ENCODE measurements at regions of chr12 and their contacts with region 1.

Region 1: GRCh38 chr12:110449799-110450497 is at the start of gene ARPC3:
- DNase-seq: peak; percentile 90
- ATAC-seq: peak; percentile 97
- H3K4me3 ChIP-seq: peak within 1 kb of the TSS; percentile 81 to 98 (median 95)
- H3K27ac ChIP-seq: peak within 1 kb of the TSS; percentile 87
- H3K4me1 ChIP-seq: peaks cover 40% of the 10 kb centered on the region
- H3K27me3 ChIP-seq: no peaks in the 10 kb centered on the region
- CTCF ChIP-seq: peak; percentile 98
- EP300 ChIP-seq: 0 out of 4 replicates have a peak, but pooled peaks have one; percentile 2 to 19
- POLR2A ChIP-seq: peak; percentile 70 to 73
- RAD21 ChIP-seq: peak; percentile 93
- total RNA-seq, gene ARPC3: 234 and 322 TPM in 2 replicates

Region 2: DNA sequence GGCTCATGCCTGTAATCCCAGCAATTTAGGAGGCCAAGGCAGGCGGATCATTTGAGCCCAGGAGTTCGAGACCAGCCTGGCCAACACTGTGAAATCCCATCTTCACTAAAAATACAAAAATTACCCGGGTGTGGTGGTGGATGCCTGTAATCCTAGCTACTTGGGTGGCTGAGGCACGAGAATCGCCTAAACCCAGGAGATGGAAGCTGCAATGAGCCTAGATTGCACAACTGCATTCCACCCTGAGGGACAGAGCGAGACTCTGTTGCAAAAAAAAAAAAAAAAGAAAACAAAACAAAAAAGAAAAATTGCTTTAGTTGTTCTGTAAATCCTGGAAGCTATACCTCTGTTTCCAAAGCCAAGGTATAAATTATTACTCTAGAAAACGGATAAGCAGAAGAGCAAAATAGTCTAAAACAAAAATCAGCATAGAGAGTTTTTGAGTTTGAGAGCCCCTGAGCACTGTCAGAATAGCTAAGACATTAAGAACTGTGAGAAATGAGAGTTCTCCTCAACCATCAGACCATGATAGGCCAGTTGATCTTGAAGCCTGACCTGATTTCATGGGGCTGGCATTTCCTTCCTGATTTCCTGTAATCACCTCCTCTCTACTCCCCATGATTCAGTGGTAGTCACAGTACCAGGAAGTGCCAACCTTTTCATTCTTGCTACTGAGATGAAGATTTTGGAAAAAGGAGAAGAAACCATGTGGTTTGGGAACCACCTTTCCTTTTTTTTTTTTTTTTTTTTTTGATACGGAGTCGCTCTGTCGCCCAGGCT is 137.2 kb before region 1 on chr12:
- CTCF ChIA-PET with region 1: no interaction called
- POLR2A ChIA-PET with region 1: no interaction called
- in situ Hi-C with region 1: no loop called
- intact Hi-C with region 1: no loop called
- DNase-seq: no peak
- ATAC-seq: peak; percentile 35
- H3K4me3 ChIP-seq: no peak overlapping the region
- H3K27ac ChIP-seq: peak overlapping the region; percentile 35
- H3K4me1 ChIP-seq: peaks cover 67% of the 10 kb centered on the region
- H3K27me3 ChIP-seq: no peaks in the 10 kb centered on the region
- CTCF ChIP-seq: no peak
- EP300 ChIP-seq: no peak
- POLR2A ChIP-seq: no peak
- RAD21 ChIP-seq: no peak

Region 3: DNA sequence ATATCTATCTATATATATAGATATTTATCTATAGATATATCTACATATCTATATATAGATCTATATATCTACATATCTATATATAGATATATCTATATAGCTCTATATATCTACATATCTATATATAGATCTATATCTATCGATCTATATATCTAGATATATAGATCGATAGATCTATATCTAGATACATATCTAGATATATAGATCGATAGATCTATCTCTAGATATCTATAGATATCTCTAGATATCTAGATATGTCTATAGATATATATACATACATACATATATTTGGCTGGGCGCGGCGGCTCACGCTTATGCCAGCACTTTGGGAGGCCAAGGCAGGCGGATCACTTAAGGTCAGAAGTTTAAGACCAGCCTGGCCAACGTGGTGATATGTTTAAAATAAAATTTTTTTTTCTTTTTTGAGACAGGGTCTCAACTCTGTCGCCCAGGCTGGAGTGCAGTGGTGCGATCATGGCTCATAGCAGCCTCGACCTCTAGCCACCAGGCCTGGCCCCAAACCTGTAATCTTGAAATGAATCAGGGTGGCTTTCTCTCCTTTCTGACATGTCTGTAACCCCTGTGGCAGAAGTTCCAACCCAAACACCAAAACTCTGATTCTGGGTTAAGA is 17.9 kb before region 1 on chr12:
- CTCF ChIA-PET with region 1: no interaction called
- POLR2A ChIA-PET with region 1: interaction called, 15 read pairs
- in situ Hi-C with region 1: no loop called
- intact Hi-C with region 1: no loop called
- DNase-seq: no peak
- ATAC-seq: no peak
- H3K4me3 ChIP-seq: peak overlapping the region in 2 of 3 experiments; percentile 57 to 59; a peak in 2 of 6 replicates
- H3K27ac ChIP-seq: no peak overlapping the region
- H3K4me1 ChIP-seq: no peaks in the 10 kb centered on the region
- H3K27me3 ChIP-seq: no peaks in the 10 kb centered on the region
- CTCF ChIP-seq: no peak
- EP300 ChIP-seq: no peak
- POLR2A ChIP-seq: no peak
- RAD21 ChIP-seq: no peak

Region 4: DNA sequence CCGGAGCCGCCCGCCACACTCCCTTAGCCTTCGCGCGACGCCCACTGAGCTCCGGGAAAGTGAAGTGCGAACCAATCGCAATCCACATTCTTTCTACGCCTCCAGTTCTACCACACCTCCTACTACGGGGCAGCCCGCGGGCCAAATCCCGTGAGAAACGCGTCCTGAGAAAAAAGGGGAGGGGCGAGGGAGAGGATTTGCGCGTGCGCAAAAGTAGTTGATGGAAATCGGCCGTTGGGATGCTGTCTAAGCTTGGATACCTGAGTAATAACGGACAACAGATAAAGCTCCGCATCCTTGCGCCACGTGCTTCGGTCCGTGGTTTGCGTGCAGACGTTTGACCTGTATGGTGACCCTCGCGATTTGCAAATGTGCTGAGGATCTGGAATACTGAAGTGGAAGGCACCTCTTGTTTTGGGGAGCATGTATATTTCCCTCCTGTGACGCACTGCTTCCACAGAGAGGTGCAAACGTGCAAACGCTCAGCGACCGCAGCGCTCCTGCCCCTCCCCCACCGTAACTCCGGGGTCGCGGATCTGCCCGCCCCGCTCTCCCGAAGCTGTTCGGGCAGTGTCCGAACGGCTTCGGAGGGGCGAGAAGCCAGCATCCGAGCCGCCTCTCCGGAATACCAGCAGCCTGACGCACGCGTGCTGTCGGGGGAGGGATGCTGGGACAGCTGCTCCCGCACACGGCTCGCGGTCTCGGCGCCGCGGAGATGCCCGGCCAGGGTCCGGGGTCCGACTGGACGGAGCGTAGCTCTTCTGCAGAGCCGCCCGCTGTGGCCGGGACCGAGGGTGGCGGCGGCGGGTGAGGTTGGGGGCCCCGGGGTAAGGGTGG is 18.5 kb after region 1 on chr12 and contains the starts of genes FAM216A and GPN3:
- CTCF ChIA-PET with region 1: interaction called, 4 read pairs
- POLR2A ChIA-PET with region 1: interaction called, 49 read pairs
- in situ Hi-C with region 1: no loop called
- intact Hi-C with region 1: loop called (anchors 2 kb)
- DNase-seq: peak; percentile 97
- ATAC-seq: peak; percentile 91
- H3K4me3 ChIP-seq: peak within 1 kb of the TSS; percentile 86 to 92 (median 91)
- H3K27ac ChIP-seq: peak within 1 kb of the TSS; percentile 81
- H3K4me1 ChIP-seq: peaks cover 24% of the 10 kb centered on the region
- H3K27me3 ChIP-seq: peaks cover 0 to 3% of the 10 kb centered on the region in 2 experiments; a peak in 1 of 5 replicates
- CTCF ChIP-seq: 0 out of 2 replicates have a peak, but pooled peaks have one; percentile 1
- EP300 ChIP-seq: peak in 1 of 2 experiments; percentile 50; a peak in 1 of 4 replicates
- POLR2A ChIP-seq: peak; percentile 70 to 91
- RAD21 ChIP-seq: no peak
- total RNA-seq, gene FAM216A: 19.4 and 20.3 TPM in 2 replicates
- total RNA-seq, gene GPN3: 29.5 and 41.4 TPM in 2 replicates

Region 5: GRCh38 chr12:110501752-110502738 is 52.1 kb after region 1 on chr12 and contains the starts of genes RAD9B and VPS29:
- CTCF ChIA-PET with region 1: no interaction called
- POLR2A ChIA-PET with region 1: interaction called, 6 read pairs
- in situ Hi-C with region 1: no loop called
- intact Hi-C with region 1: loop called (anchors 5 kb)
- DNase-seq: peak; percentile 94
- ATAC-seq: peak; percentile 99
- H3K4me3 ChIP-seq: peak within 1 kb of the TSS; percentile 84 to 95 (median 86)
- H3K27ac ChIP-seq: peak within 1 kb of the TSS; percentile 89
- H3K4me1 ChIP-seq: peaks cover 30% of the 10 kb centered on the region
- H3K27me3 ChIP-seq: peaks cover 0 to 3% of the 10 kb centered on the region in 2 experiments; a peak in 1 of 5 replicates
- CTCF ChIP-seq: no peak; the same call in 1 of the 2 replicates
- EP300 ChIP-seq: peak in 1 of 2 experiments; percentile 39; a peak in 1 of 4 replicates
- POLR2A ChIP-seq: peak; percentile 89 to 91
- RAD21 ChIP-seq: no peak
- total RNA-seq, gene RAD9B: 0.38 TPM in 2 replicates
- total RNA-seq, gene VPS29: 107 and 161 TPM in 2 replicates

Region 6: GRCh38 chr12:110546339-110546738 is 96.4 kb after region 1 on chr12:
- CTCF ChIA-PET with region 1: no interaction called
- POLR2A ChIA-PET with region 1: no interaction called
- in situ Hi-C with region 1: no loop called
- intact Hi-C with region 1: loop called (anchors 5 kb)
- DNase-seq: no peak
- ATAC-seq: no peak
- H3K4me3 ChIP-seq: no peak overlapping the region
- H3K27ac ChIP-seq: no peak overlapping the region
- H3K4me1 ChIP-seq: no peaks in the 10 kb centered on the region
- H3K27me3 ChIP-seq: no peaks in the 10 kb centered on the region
- CTCF ChIP-seq: no peak
- EP300 ChIP-seq: no peak
- POLR2A ChIP-seq: no peak
- RAD21 ChIP-seq: no peak

Region 7: GRCh38 chr12:110600254-110600653 is 150.3 kb after region 1 on chr12:
- CTCF ChIA-PET with region 1: interaction called, 15 read pairs
- POLR2A ChIA-PET with region 1: interaction called, 11 read pairs
- in situ Hi-C with region 1: loop called (anchors 5 kb)
- intact Hi-C with region 1: loop called (anchors 1 kb)
- DNase-seq: peak; percentile 70
- ATAC-seq: no peak; the same call in 2 of the 3 replicates
- H3K4me3 ChIP-seq: no peak overlapping the region
- H3K27ac ChIP-seq: no peak overlapping the region
- H3K4me1 ChIP-seq: peaks cover 15% of the 10 kb centered on the region
- H3K27me3 ChIP-seq: no peaks in the 10 kb centered on the region
- CTCF ChIP-seq: peak; percentile 74
- EP300 ChIP-seq: no peak
- POLR2A ChIP-seq: no peak
- RAD21 ChIP-seq: peak; percentile 86

Measured in HepG2 (cell line).